SK-N-SH (cell line): ENCODE measurements at regions of chr3 and their contacts with region 1.

Region 1: DNA sequence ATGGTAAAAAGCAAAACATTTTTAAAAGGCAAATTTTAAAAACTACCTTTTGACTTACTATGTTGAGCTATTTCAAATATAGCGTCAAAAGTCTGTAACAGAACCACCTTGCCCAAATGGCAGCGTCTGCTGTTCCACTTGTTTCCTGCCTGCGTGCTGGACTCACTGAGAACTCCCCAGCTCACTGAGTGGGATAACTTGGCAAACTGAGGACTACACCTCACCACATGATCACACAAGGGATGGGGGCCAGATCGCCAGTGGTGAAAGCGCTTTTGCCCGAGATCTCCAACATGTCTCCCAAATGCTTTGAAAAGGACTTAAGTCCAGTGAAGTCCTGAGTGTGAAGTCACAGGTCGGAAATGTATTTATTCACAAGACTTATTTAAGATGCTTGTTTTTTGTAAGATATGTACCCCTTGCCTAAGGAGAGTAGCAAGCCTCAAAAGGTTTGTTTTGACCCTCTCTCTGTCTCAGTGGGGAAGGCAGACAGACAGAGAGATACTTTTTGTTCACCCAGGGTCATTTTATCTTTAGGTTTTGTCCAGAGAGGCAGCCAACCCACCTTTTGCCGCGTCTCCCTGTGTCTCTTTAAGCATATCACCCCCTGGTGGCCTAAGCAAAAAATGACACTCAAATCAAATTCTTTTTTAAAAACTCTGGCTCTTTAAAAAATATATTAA is 192.6 kb downstream of the PDZRN3 start:
- DNase-seq: peak; percentile 68
- H3K4me3 ChIP-seq: peak overlapping the region in 1 of 2 experiments; percentile 38; a peak in 2 of 4 replicates
- H3K27ac ChIP-seq: peak overlapping the region in 1 of 2 experiments; percentile 94; a peak in 2 of 4 replicates
- H3K4me1 ChIP-seq: peaks cover 0 to 54% of the 10 kb centered on the region in 2 experiments; a peak in 2 of 4 replicates
- H3K27me3 ChIP-seq: no peaks in the 10 kb centered on the region
- CTCF ChIP-seq: peak; percentile 85
- EP300 ChIP-seq: no peak
- RAD21 ChIP-seq: peak; percentile 81

Region 2: DNA sequence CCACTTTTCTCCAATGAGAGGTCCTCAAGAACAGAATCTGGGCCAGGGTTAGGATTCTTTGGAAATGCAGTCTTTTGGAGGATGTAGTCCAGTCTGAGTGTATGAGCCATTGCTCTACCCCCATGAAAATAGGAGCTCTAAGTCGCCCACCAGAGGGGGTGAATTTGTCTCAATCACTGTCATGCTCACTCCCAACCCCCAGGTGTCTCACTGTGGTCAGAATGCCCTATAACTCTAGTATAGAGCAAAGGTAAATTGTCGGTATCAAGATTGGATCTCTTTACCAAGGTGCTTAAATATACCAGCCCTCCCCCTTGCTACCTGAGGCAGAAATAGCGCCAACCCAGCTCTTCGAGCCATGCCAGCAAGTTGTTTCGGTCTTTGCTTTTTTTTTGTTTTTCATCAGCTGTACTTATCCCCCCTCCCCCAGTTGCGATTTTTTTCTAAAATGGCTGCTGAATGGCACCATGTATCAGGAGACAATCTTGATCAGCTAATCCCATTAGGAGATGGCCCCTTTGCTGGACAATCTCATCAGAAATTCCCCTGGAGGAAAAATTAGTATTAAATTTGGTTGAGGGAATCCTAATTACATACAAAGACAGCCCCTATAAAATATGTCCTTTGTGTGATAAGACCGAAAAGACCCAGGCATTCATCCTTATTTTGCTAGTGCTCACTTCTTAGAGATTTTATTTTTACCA is 240.0 kb before region 1 on chr3:
- CTCF ChIA-PET with region 1: interaction called, 18 read pairs
- POLR2A ChIA-PET with region 1: no interaction called
- DNase-seq: peak; percentile 61
- H3K4me3 ChIP-seq: no peak overlapping the region; a peak in 2 of 4 replicates
- H3K27ac ChIP-seq: peak overlapping the region in 1 of 2 experiments; percentile 91; a peak in 2 of 4 replicates
- H3K4me1 ChIP-seq: peaks cover 0 to 8% of the 10 kb centered on the region in 2 experiments; a peak in 2 of 4 replicates
- H3K27me3 ChIP-seq: no peaks in the 10 kb centered on the region
- CTCF ChIP-seq: peak; percentile 38; the same call in 1 of the 2 replicates
- EP300 ChIP-seq: peak in 1 of 2 experiments; percentile 96; a peak in 2 of 4 replicates
- RAD21 ChIP-seq: peak; percentile 64

Region 3: DNA sequence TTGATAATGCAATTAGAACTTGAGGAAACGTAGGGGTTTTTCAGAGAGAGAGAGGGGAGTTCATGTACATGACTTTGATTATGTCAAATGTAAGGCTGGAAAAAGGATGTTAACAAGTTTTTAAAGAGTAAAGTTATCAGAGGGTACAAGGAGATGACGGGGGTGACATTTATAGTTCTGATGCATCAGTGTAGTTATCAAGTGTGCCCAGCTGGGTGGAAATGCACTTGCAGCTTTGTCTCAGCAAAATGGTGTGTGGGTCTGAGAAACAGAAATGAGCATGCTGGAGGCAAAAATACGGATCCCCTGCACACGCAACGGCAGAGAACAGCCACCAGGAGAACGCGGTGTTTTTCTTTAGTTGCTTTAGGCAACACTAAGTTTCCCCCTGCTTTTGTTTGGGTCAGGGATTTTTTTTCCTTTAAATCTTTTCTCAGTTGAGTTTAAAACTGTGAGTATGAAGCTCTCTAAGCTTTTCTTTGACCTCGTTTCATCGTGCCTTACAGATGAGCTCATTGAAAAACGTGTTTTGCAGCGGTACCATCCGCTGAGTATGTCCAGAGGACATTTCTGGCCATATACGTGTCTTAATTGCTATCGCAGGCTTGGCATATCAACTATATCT is 12.9 kb before region 1 on chr3:
- CTCF ChIA-PET with region 1: interaction called, 10 read pairs
- POLR2A ChIA-PET with region 1: no interaction called
- DNase-seq: no peak
- H3K4me3 ChIP-seq: peak overlapping the region in 1 of 2 experiments; percentile 36; a peak in 1 of 4 replicates
- H3K27ac ChIP-seq: peak overlapping the region; percentile 22 to 61
- H3K4me1 ChIP-seq: peaks cover 0 to 32% of the 10 kb centered on the region in 2 experiments; a peak in 2 of 4 replicates
- H3K27me3 ChIP-seq: no peaks in the 10 kb centered on the region
- CTCF ChIP-seq: peak; percentile 43
- EP300 ChIP-seq: peak in 1 of 2 experiments; percentile 30; a peak in 1 of 4 replicates
- RAD21 ChIP-seq: no peak

Region 4: GRCh38 chr3:73493543-73494308 is 61.6 kb after region 1 on chr3:
- CTCF ChIA-PET with region 1: interaction called, 12 read pairs
- POLR2A ChIA-PET with region 1: no interaction called
- DNase-seq: no peak
- H3K4me3 ChIP-seq: no peak overlapping the region
- H3K27ac ChIP-seq: peak overlapping the region; percentile 34 to 67
- H3K4me1 ChIP-seq: peaks cover 21 to 28% of the 10 kb centered on the region in 2 experiments; a peak in 3 of 4 replicates
- H3K27me3 ChIP-seq: no peaks in the 10 kb centered on the region
- CTCF ChIP-seq: no peak
- EP300 ChIP-seq: no peak
- RAD21 ChIP-seq: no peak